ENCODE measurements at regions of chr11 and their contacts with region 1.

Region 1: DNA sequence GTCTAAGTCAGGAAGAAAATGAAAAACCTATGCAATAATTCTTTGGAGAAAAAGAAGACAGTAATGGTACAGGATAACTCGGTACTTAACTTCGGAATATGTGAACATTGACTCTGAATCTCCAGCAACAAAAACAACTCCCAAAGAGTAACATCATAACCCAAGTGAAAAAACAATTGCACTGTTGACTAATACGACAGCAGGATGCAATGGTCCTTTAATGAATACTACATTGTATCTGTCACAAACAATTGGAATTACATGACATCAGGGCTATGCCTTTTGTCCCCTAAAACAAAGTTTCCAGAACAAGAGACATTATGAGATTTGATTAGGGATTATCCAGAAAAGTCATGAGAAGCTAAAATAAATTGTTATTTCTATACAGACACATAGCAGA is 1065.9 kb downstream of the LRRC4C start:
- DNase-seq: no peak
- H3K4me3 ChIP-seq: no peak overlapping the region
- H3K27ac ChIP-seq: no peak overlapping the region
- H3K4me1 ChIP-seq: no peaks in the 10 kb centered on the region
- H3K27me3 ChIP-seq: no peaks in the 10 kb centered on the region
- CTCF ChIP-seq: no peak
- POLR2A ChIP-seq: no peak

Region 2: GRCh38 chr11:39804271-39804670 is 589.2 kb before region 1 on chr11:
- intact Hi-C with region 1: loop called (anchors 5 kb)
- DNase-seq: no peak
- H3K4me3 ChIP-seq: no peak overlapping the region
- H3K27ac ChIP-seq: no peak overlapping the region
- H3K4me1 ChIP-seq: no peaks in the 10 kb centered on the region
- H3K27me3 ChIP-seq: no peaks in the 10 kb centered on the region
- CTCF ChIP-seq: no peak
- POLR2A ChIP-seq: no peak

Region 3: GRCh38 chr11:40619654-40620053 is 226.1 kb after region 1 on chr11:
- intact Hi-C with region 1: no loop called
- DNase-seq: no peak
- H3K4me3 ChIP-seq: no peak overlapping the region
- H3K27ac ChIP-seq: no peak overlapping the region
- H3K4me1 ChIP-seq: no peaks in the 10 kb centered on the region
- H3K27me3 ChIP-seq: no peaks in the 10 kb centered on the region
- CTCF ChIP-seq: no peak
- POLR2A ChIP-seq: no peak